Naive thymus-derived CD4-positive, alpha-beta T cell (primary cell): ENCODE measurements at regions of chr7 and their contacts with region 1.

Region 1: DNA sequence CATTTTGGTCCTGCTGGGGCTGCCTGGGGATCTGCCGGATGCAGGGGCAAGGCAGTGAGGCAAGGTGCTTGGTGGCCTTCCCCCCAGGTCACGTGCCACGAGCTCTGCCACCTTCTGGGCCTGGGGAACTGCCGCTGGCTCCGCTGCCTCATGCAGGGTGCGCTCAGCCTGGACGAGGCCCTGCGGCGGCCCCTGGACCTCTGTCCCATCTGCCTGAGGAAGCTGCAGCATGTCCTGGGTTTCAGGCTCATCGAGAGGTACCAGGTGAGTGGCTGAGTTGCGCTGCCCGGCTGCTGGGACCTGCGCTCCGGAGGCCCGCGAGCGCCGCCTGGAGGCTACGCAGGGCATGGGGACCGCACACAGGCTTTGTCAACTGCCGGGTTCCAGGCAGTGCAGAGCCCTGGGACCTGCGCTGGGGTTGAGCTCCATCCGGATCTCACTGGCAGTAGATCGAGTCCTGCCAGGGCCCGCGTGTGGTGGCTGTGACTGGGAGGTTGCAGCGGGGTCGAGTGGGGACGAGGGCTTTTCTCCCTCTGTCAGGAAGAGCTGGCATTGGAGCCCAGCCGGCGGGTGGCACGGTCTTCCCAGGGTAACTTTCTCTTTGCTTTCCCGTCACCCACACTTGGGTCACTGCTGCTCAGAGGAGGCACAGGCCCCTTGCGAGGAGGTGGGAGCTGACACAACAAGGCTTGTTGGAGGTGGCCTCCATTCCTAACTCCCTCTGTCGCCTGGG is 21.7 kb downstream of the AMZ1 start:
- DNase-seq: peak; percentile 59 to 84 (median 81)
- ATAC-seq: peak; percentile 90
- H3K4me3 ChIP-seq: peak overlapping the region; percentile 37
- H3K4me3 Mint-ChIP-seq: peak overlapping the region in 7 of 10 donors; percentile 25 to 73 (median 60)
- H3K27ac ChIP-seq: no peak overlapping the region
- H3K27ac Mint-ChIP-seq: peak overlapping the region in 2 of 9 donors; percentile 25 to 63
- H3K4me1 ChIP-seq: peaks cover 24 to 35% of the 10 kb centered on the region in 2 donors
- H3K4me1 Mint-ChIP-seq: peaks cover 15 to 39% (median 31%) of the 10 kb centered on the region in 7 donors
- H3K27me3 ChIP-seq: no peaks in the 10 kb centered on the region
- H3K27me3 Mint-ChIP-seq: peaks cover 0 to 17% (median 8%) of the 10 kb centered on the region in 5 donors

Region 2: DNA sequence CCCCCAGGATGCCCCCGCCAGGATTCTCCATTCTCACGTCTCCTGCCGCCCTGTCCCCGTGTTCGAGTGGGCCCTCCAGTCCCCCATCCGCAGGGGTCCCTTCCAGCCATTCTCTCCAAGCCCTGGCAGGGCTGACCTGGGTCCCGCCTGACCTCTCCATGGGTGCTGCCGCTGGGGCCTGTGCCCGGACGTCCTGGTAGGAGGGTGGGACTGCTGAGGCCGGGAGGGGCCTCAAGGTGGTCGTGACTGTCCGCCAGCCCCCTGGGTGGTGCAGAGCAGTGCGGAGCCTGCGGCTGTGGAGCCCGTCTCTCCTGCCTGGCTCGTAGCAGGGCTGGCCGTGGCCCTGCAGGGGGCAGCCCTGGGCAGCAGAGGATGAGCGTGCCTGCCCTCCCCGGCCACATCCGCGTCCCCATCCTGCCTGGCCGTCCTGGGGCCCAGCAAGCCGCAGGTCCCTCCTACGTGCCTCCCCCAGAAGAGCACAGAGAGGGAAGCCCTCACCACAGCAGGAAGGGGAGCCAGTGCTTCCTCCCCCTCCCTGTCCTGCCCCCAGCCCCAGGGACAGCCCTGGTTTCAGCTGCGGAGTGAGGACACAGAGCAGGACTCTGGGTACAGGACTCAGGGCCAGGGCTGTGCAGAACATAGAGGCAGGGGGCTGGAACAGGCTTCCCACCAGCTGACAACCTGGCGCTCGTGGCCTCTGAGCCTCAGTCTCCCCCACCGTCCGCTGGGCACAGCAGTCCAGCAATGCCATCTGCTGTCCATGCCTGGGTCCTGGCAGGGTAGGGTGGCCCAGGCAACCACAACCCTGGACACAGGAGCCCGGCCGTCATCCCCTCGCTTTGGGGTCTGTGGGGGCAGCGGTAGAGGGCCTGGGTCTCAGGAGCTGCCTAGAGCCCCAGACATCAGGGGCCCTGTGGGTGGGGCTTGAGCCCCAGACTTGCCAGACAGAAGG is 232.0 kb before region 1 on chr7:
- CTCF ChIA-PET with region 1: no interaction called
- POLR2A ChIA-PET with region 1: no interaction called
- intact Hi-C with region 1: loop called in 1 of 2 experiments (anchors 1 kb)
- DNase-seq: peak; percentile 30 to 75 (median 61)
- ATAC-seq: peak; percentile 94
- H3K4me3 ChIP-seq: no peak overlapping the region
- H3K4me3 Mint-ChIP-seq: peak overlapping the region in 1 of 10 donors; percentile 38
- H3K27ac ChIP-seq: no peak overlapping the region
- H3K27ac Mint-ChIP-seq: peak overlapping the region in 1 of 9 donors; percentile 33
- H3K4me1 ChIP-seq: peaks cover 7 to 13% of the 10 kb centered on the region in 2 donors
- H3K4me1 Mint-ChIP-seq: peaks cover 0 to 10% (median 0%) of the 10 kb centered on the region in 7 donors
- H3K27me3 ChIP-seq: no peaks in the 10 kb centered on the region
- H3K27me3 Mint-ChIP-seq: peaks cover 0 to 3% (median 0%) of the 10 kb centered on the region in 5 donors

Region 3: GRCh38 chr7:2670720-2671391 is 38.9 kb before region 1 on chr7:
- CTCF ChIA-PET with region 1: interaction called, 45 read pairs
- POLR2A ChIA-PET with region 1: no interaction called
- intact Hi-C with region 1: loop called (anchors 1 kb)
- DNase-seq: peak; percentile 30 to 70 (median 59)
- ATAC-seq: peak; percentile 83
- H3K4me3 ChIP-seq: no peak overlapping the region
- H3K4me3 Mint-ChIP-seq: peak overlapping the region in 1 of 10 donors; percentile 49
- H3K27ac ChIP-seq: no peak overlapping the region
- H3K27ac Mint-ChIP-seq: peak overlapping the region in 3 of 9 donors; percentile 26 to 47 (median 34)
- H3K4me1 ChIP-seq: peaks cover 6% of the 10 kb centered on the region in 2 donors
- H3K4me1 Mint-ChIP-seq: peaks cover 0 to 13% (median 4%) of the 10 kb centered on the region in 7 donors
- H3K27me3 ChIP-seq: no peaks in the 10 kb centered on the region
- H3K27me3 Mint-ChIP-seq: peaks cover 0 to 35% (median 4%) of the 10 kb centered on the region in 5 donors

Region 4: GRCh38 chr7:2698581-2699288 is 11.0 kb before region 1 on chr7:
- CTCF ChIA-PET with region 1: interaction called, 17 read pairs
- POLR2A ChIA-PET with region 1: interaction called, 14 read pairs
- intact Hi-C with region 1: loop called in 1 of 2 experiments (anchors 1 kb)
- DNase-seq: peak in 8 of 9 donors; percentile 24 to 61 (median 59)
- ATAC-seq: peak; percentile 90
- H3K4me3 ChIP-seq: peak overlapping the region; percentile 46
- H3K4me3 Mint-ChIP-seq: peak overlapping the region; percentile 46 to 88 (median 80)
- H3K27ac ChIP-seq: no peak overlapping the region
- H3K27ac Mint-ChIP-seq: peak overlapping the region in 8 of 9 donors; percentile 0 to 89 (median 76)
- H3K4me1 ChIP-seq: peaks cover 15 to 16% of the 10 kb centered on the region in 2 donors
- H3K4me1 Mint-ChIP-seq: peaks cover 16 to 29% (median 24%) of the 10 kb centered on the region in 7 donors
- H3K27me3 ChIP-seq: no peaks in the 10 kb centered on the region
- H3K27me3 Mint-ChIP-seq: peaks cover 0 to 20% (median 0%) of the 10 kb centered on the region in 5 donors

Region 5: GRCh38 chr7:2720582-2721491 is 11.1 kb after region 1 on chr7:
- CTCF ChIA-PET with region 1: interaction called, 16 read pairs
- POLR2A ChIA-PET with region 1: interaction called, 6 read pairs
- intact Hi-C with region 1: no loop called
- DNase-seq: peak in 1 of 9 donors; percentile 71
- ATAC-seq: peak; percentile 55
- H3K4me3 ChIP-seq: no peak overlapping the region
- H3K4me3 Mint-ChIP-seq: peak overlapping the region in 1 of 10 donors; percentile 41
- H3K27ac ChIP-seq: no peak overlapping the region
- H3K27ac Mint-ChIP-seq: peak overlapping the region in 3 of 9 donors; percentile 70 to 86 (median 73)
- H3K4me1 ChIP-seq: peaks cover 9 to 30% of the 10 kb centered on the region in 2 donors
- H3K4me1 Mint-ChIP-seq: peaks cover 21 to 47% (median 40%) of the 10 kb centered on the region in 7 donors
- H3K27me3 ChIP-seq: no peaks in the 10 kb centered on the region
- H3K27me3 Mint-ChIP-seq: no peaks in the 10 kb centered on the region

Region 6: GRCh38 chr7:2757904-2758672 is 48.4 kb after region 1 on chr7:
- CTCF ChIA-PET with region 1: no interaction called
- POLR2A ChIA-PET with region 1: no interaction called
- intact Hi-C with region 1: loop called in 1 of 2 experiments (anchors 2 kb)
- DNase-seq: peak in 2 of 9 donors; percentile 19 to 73
- ATAC-seq: peak; percentile 79
- H3K4me3 ChIP-seq: no peak overlapping the region
- H3K4me3 Mint-ChIP-seq: peak overlapping the region in 2 of 10 donors; percentile 10 to 57
- H3K27ac ChIP-seq: no peak overlapping the region
- H3K27ac Mint-ChIP-seq: peak overlapping the region in 2 of 9 donors; percentile 74 to 92
- H3K4me1 ChIP-seq: peaks cover 0 to 29% of the 10 kb centered on the region in 2 donors
- H3K4me1 Mint-ChIP-seq: peaks cover 8 to 45% (median 20%) of the 10 kb centered on the region in 7 donors
- H3K27me3 ChIP-seq: no peaks in the 10 kb centered on the region
- H3K27me3 Mint-ChIP-seq: no peaks in the 10 kb centered on the region

Region 7: DNA sequence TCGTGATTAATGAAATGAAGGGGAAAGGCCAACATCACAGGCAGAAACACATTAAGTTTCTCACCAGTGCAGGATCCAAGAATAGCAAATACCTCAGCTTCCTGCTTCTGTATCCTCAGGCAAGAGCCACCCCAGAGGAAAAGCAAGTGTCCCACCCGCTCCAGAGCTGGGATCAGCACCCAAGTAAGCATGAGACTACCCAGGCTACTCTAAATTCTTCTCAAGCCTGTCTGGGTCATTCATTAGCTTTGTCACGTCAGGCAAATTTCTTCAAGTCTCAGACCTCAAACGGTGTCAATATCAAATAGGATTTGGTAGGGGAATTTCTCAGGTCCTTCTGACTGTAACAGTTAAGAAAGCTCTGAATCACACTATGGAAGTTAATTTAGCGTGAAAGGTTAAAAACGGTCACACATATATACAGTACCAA is 75.4 kb after region 1 on chr7:
- CTCF ChIA-PET with region 1: no interaction called
- POLR2A ChIA-PET with region 1: no interaction called
- intact Hi-C with region 1: no loop called
- DNase-seq: no peak
- ATAC-seq: no peak
- H3K4me3 ChIP-seq: no peak overlapping the region
- H3K4me3 Mint-ChIP-seq: no peak overlapping the region
- H3K27ac ChIP-seq: no peak overlapping the region
- H3K27ac Mint-ChIP-seq: peak overlapping the region in 1 of 9 donors; percentile 34
- H3K4me1 ChIP-seq: no peaks in the 10 kb centered on the region
- H3K4me1 Mint-ChIP-seq: peaks cover 7 to 25% (median 12%) of the 10 kb centered on the region in 7 donors
- H3K27me3 ChIP-seq: no peaks in the 10 kb centered on the region
- H3K27me3 Mint-ChIP-seq: no peaks in the 10 kb centered on the region